Activated naive CD4-positive, alpha-beta T cell treated with anti-CD3 and anti-CD28 coated beads for 36 hours (primary cell): ENCODE measurements at regions of chr20 and their contacts with region 1.

Region 1: GRCh38 chr20:34704177-34705007 is at the start of gene TP53INP2:
- DNase-seq: peak; percentile 81
- H3K4me3 Mint-ChIP-seq: peak within 1 kb of the TSS; percentile 90
- H3K27ac Mint-ChIP-seq: peak within 1 kb of the TSS; percentile 13
- H3K4me1 Mint-ChIP-seq: peaks cover 10% of the 10 kb centered on the region
- H3K27me3 Mint-ChIP-seq: peaks cover 6% of the 10 kb centered on the region
- total RNA-seq, gene TP53INP2: 1.9 TPM

Region 2: DNA sequence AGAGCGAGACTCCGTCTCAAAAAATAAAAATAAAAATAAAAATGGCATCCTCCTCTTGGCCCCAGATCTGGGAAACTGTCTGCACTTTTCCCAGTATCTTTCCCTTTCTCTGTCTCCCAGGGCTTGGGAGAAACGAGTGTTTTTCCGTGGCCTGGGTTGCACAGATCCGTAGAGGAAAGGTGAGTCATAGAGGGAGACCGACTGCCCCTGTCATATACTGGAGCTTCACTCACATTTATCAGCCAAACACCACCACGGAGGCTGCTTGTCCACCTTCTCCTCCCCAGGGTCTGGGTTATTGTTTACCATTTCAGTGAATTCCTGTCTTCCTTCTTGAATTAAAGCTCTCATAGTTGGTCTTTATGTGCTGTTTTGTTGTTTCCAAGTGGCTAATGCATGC is 560.4 kb before region 1 on chr20:
- CTCF ChIA-PET with region 1: no interaction called
- intact Hi-C with region 1: no loop called
- DNase-seq: no peak
- H3K4me3 Mint-ChIP-seq: no peak overlapping the region
- H3K27ac Mint-ChIP-seq: no peak overlapping the region
- H3K4me1 Mint-ChIP-seq: no peaks in the 10 kb centered on the region
- H3K27me3 Mint-ChIP-seq: peaks cover 2% of the 10 kb centered on the region

Region 3: DNA sequence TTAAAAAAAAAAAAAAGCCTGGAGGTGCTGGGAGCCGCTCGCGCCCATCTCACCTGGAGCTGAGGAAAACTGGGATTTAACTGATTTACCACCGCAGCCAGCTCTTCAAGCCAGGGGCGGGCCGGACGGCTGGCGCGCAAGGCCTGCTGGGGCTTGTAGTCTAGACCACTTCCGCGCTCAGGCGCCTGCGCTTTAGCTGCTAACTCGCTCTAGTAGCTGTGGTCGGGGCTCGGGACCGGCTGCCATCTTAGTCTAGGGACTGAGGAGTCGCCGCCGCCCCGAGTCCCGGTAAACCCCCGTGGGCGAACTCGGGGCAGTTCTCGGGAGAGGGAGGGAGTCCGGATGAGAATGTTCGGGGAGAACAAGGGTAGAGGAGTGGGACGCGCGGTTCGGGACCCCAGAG is 341.3 kb before region 1 on chr20 and contains the start of gene ITCH:
- CTCF ChIA-PET with region 1: no interaction called
- intact Hi-C with region 1: loop called (anchors 1 kb)
- DNase-seq: peak; percentile 96
- H3K4me3 Mint-ChIP-seq: peak within 1 kb of the TSS; percentile 97
- H3K27ac Mint-ChIP-seq: peak within 1 kb of the TSS; percentile 95
- H3K4me1 Mint-ChIP-seq: peaks cover 34% of the 10 kb centered on the region
- H3K27me3 Mint-ChIP-seq: no peaks in the 10 kb centered on the region
- total RNA-seq, gene ITCH: 35.3 to 40.0 TPM

Region 4: GRCh38 chr20:34538671-34539123 is 165.7 kb before region 1 on chr20:
- CTCF ChIA-PET with region 1: interaction called, 52 read pairs
- intact Hi-C with region 1: loop called (anchors 1 kb)
- DNase-seq: peak; percentile 71
- H3K4me3 Mint-ChIP-seq: no peak overlapping the region
- H3K27ac Mint-ChIP-seq: no peak overlapping the region
- H3K4me1 Mint-ChIP-seq: peaks cover 12% of the 10 kb centered on the region
- H3K27me3 Mint-ChIP-seq: no peaks in the 10 kb centered on the region

Region 5: GRCh38 chr20:34579979-34580940 is 124.1 kb before region 1 on chr20:
- CTCF ChIA-PET with region 1: interaction called, 7 read pairs
- intact Hi-C with region 1: loop called (anchors 1 kb)
- DNase-seq: peak; percentile 26
- H3K4me3 Mint-ChIP-seq: no peak overlapping the region
- H3K27ac Mint-ChIP-seq: peak overlapping the region; percentile 94
- H3K4me1 Mint-ChIP-seq: peaks cover 24% of the 10 kb centered on the region
- H3K27me3 Mint-ChIP-seq: no peaks in the 10 kb centered on the region

Region 6: GRCh38 chr20:34768096-34768495 is 63.7 kb after region 1 on chr20:
- CTCF ChIA-PET with region 1: interaction called, 12 read pairs
- intact Hi-C with region 1: loop called (anchors 2 kb)
- DNase-seq: no peak
- H3K4me3 Mint-ChIP-seq: no peak overlapping the region
- H3K27ac Mint-ChIP-seq: no peak overlapping the region
- H3K4me1 Mint-ChIP-seq: no peaks in the 10 kb centered on the region
- H3K27me3 Mint-ChIP-seq: no peaks in the 10 kb centered on the region